Sciatic nerve (tissue), 2 donors: ENCODE measurements at regions of chr5 and their contacts with region 1.

Region 1: GRCh38 chr5:52956915-52957747 is 32.0 kb upstream of the ITGA2 start:
- DNase-seq: no peak
- ATAC-seq: no peak

Region 2: DNA sequence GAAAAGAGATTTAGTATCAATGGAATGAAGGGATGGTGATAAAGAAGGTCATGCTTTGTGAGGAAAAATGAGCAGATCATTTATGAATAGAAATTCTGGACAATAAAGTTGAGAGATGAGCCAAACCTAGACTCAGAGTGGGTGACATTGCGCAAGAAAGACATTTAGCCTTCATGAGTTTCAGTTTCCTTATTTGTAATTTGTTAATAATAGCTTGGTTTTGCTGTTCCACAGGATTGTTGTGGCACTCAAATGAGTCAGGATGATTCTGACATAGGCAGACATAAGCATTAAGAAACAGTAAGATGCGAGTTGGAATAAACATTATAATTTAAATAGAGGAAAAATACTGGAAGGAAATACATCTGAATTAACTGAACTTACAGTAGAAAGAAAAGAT is 66.8 kb after region 1 on chr5:
- intact Hi-C with region 1: loop called (anchors 2 kb)
- DNase-seq: no peak
- ATAC-seq: peak; percentile 85

Region 3: DNA sequence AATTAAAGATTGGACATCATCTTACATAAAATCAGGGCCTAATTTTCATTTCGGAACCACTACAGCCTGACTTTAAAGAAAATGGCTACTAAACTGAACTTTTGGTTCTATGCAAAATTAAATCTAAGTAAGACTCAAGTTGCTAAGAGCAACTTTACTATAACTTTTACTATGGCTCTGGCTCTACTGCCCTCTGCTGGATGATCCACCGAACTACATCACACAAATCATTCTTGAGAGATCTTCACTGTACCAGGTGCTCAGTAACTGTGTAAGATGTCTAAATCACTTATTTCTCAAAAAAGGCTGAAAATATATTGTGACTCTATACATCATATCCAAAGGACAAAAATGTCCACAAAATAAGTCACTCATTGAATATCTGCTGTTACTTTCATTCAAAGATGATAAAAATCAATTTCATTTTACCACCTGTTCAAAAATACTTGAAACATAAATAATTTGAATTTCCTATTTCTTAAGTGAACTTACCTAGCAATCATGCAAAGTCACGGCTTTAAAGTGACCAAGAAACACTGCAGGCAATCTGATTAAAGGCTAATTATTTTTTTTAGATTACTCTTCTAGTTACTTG is 138.9 kb after region 1 on chr5:
- intact Hi-C with region 1: loop called (anchors 10 kb)
- DNase-seq: peak; percentile 76
- ATAC-seq: peak; percentile 67